Heart right ventricle (tissue), 16 donors: ENCODE measurements at regions of chr9 and their contacts with region 1.

Region 1: GRCh38 chr9:136840140-136840687 is 2.1 kb upstream of the AJM1 start:
- DNase-seq: no peak
- ATAC-seq: no peak
- H3K4me3 ChIP-seq: no peak overlapping the region
- H3K27ac ChIP-seq: no peak overlapping the region
- H3K4me1 ChIP-seq: peaks cover 17 to 39% (median 30%) of the 10 kb centered on the region in 9 donors
- H3K27me3 ChIP-seq: peaks cover 0 to 21% (median 17%) of the 10 kb centered on the region in 7 donors
- CTCF ChIP-seq: no peak

Region 2: DNA sequence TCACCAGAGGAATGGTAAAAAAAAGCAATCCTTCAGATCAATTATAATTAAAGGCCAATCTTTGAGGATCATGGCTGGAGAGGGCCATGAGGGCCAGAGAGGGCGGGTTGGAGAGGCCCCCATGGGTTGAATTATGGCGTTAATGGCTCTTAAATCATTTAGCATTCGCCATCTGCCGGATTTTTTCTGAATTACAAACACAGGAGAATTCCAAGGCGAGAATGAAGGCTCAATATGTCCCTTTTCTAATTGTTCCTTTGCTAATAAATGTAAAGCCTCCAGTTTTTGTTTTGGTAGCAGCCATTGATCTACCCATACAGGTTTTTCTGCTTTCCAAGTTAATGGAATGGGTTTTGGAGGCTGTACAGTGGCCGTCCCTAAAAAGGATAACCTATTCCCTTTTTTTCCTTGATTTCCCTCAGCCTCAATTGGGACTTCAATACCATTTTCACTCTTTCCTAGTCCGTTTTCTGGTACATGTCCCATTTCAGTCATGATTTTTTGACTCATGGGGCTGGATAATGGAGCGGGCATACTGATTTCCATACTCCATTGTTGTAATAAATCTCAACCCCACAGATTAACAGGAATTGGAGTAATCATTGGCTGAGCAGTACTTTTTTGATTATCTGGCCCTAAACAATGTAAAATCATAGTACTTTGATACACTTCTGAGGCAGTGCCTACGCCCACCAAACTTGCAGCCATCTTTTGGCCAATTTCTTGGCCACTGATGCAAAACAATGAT is 55.8 kb before region 1 on chr9:
- intact Hi-C with region 1: no loop called
- DNase-seq: no peak
- ATAC-seq: no peak
- H3K4me3 ChIP-seq: no peak overlapping the region
- H3K27ac ChIP-seq: no peak overlapping the region
- H3K4me1 ChIP-seq: peaks cover 0 to 15% (median 3%) of the 10 kb centered on the region in 9 donors
- H3K27me3 ChIP-seq: no peaks in the 10 kb centered on the region
- CTCF ChIP-seq: peak in 8 of 9 donors; percentile 11 to 61 (median 50)

Region 3: DNA sequence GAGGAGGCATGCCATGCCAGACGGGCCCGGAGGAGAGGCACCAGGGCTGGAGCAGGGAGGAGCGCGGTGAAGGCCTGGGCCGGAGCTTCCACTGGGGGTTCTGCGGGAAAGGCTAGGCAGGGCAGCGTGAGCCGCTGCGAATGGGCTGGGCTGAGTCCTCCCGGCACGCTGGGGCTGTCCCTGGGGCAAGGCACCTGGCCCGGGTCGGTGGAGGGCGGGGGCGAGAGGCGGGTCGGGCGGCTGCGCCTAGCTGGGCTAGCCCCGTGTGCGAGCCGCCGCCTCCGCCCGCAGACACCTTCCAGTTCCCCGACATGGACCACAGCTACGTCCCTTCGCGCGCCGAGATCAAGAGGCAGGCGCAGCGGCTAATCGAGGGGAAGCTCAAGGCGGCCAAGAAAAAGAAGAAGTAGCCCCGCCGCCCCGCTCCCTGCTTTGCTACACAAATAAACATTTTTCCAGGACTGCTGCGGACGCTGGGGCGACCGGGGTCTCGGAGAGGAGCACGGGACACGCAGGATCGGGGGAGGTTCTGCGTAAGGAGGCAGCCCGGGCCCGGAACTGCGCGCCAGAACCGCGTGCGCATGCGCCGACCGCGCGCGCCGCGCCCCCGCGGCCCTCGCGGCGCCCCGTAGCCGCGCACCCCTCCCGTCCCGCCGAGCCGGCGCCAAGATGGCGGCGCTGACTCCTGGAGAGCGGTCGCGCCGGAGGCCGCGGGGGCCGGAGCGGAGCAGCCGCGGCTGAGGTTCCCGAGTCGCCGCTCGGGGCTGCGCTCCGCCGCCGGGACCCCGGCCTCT is 32.7 kb before region 1 on chr9 and contains the start of gene RABL6:
- intact Hi-C with region 1: loop called in 2 of 10 experiments (anchors 5 kb)
- DNase-seq: peak; percentile 74 to 85
- ATAC-seq: peak; percentile 84 to 95 (median 89)
- H3K4me3 ChIP-seq: peak within 1 kb of the TSS; percentile 79 to 100 (median 96)
- H3K27ac ChIP-seq: peak within 1 kb of the TSS; percentile 42 to 95 (median 92)
- H3K4me1 ChIP-seq: peaks cover 0 to 43% (median 35%) of the 10 kb centered on the region in 9 donors
- H3K27me3 ChIP-seq: peaks cover 0 to 1% (median under 1%) of the 10 kb centered on the region in 7 donors
- CTCF ChIP-seq: no peak
- total RNA-seq, gene RABL6: 61.6 to 91.2 (median 66.6) TPM